ENCODE measurements at regions of chr15 and their contacts with region 1.

Region 1: GRCh38 chr15:73265536-73266153 is 103.1 kb downstream of the HCN4 start:
- DNase-seq: peak; percentile 38 to 69 (median 69)
- H3K4me3 ChIP-seq: no peak overlapping the region
- H3K27ac ChIP-seq: no peak overlapping the region
- H3K4me1 ChIP-seq: no peaks in the 10 kb centered on the region
- H3K27me3 ChIP-seq: peaks cover 0 to 7% (median 0%) of the 10 kb centered on the region in 5 experiments

Region 2: DNA sequence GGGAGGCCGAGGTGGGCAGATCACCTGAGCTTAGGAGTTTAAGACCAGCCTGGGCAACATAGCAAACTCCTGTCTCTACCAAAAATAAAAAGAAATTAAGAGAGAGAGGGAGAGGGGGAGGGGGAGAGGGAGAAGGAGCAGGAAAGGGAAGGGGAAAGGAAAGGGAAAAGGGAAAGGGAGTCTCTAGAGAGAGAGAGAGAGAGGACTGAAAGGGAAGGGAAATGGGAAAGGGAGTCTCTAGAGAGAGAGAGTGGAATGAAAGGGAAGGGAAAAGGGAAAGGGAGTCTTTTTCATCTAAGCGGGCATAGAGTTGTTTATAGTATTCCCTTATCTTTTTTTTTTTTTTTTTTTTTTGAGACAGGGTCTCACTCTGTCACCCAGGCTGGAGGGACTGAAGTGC is 65.3 kb before region 1 on chr15:
- CTCF ChIA-PET with region 1: no interaction called
- POLR2A ChIA-PET with region 1: no interaction called
- DNase-seq: no peak
- H3K4me3 ChIP-seq: no peak overlapping the region
- H3K27ac ChIP-seq: no peak overlapping the region
- H3K4me1 ChIP-seq: no peaks in the 10 kb centered on the region
- H3K27me3 ChIP-seq: peaks cover 2 to 5% (median 4%) of the 10 kb centered on the region in 5 experiments

Region 3: DNA sequence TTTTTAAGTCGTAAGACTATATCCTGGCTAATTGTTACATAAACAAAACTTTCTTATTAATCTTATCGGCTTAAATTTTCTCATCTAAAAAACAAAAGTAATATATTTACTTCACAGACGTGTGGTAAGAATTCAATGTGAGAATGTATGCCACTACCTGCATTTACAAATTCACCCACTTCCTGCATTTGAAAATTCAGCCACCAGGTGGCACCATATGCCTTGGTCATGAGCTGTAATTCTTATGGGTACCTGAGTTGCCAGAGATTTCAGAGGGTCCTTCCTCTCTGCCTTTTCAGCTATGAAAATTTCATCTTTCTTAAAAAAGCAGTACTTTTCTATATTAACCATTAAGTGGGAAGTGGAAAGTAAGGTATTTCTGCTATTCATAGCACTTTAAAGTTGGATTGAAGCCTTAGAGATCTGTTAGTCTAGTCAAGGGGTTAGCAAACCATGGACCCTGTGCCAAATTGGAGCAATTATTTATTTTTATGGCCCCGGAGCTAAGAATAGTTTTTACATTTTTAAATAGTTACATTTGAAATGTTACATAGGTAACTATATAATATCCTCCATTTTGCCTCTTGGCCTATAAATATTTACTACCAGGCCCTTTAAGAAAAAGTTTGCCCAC is 24.7 kb before region 1 on chr15:
- CTCF ChIA-PET with region 1: interaction called, 18 read pairs
- POLR2A ChIA-PET with region 1: no interaction called
- DNase-seq: peak; percentile 72 to 87 (median 82)
- H3K4me3 ChIP-seq: no peak overlapping the region
- H3K27ac ChIP-seq: no peak overlapping the region
- H3K4me1 ChIP-seq: no peaks in the 10 kb centered on the region
- H3K27me3 ChIP-seq: peaks cover 1 to 12% (median 4%) of the 10 kb centered on the region in 5 experiments

Region 4: GRCh38 chr15:73249499-73249898 is 16.1 kb before region 1 on chr15:
- CTCF ChIA-PET with region 1: interaction called, 11 read pairs
- POLR2A ChIA-PET with region 1: no interaction called
- DNase-seq: no peak
- H3K4me3 ChIP-seq: no peak overlapping the region
- H3K27ac ChIP-seq: no peak overlapping the region
- H3K4me1 ChIP-seq: no peaks in the 10 kb centered on the region
- H3K27me3 ChIP-seq: peaks cover 5 to 31% (median 7%) of the 10 kb centered on the region in 5 experiments

Region 5: DNA sequence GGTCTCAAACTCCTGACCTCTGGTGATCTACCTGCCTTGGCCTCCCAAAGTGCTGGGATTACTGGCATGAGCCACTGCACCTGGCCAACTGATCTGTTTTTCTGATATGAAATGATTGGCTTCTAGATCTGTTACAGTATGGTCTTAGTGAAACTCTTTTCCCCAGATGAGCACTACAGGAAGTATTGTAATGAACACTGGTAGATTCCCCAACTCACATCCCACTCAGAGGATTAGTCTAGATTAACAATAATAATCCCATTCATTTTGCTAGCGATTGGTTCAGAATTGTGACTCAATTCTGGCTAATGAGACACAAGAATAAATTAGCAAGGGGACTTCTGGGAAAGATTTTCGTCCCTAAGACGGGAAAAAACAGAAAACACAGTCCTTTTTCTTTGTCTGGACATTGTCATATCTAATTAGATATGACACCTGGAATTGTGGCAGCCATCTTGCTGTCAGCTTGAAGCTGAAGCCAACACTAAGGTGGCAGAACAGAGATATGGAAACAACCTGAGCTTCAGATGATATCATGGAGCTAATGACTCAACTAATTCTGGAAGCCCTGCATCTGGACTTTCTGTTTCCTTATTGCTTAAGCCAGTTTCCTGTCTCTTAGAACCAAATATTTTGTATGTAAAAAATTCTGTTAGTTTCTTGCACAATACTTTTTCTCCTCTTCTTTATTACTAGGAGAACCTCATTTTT is 384.9 kb after region 1 on chr15:
- CTCF ChIA-PET with region 1: no interaction called
- POLR2A ChIA-PET with region 1: no interaction called
- DNase-seq: peak; percentile 72 to 94 (median 90)
- H3K4me3 ChIP-seq: peak overlapping the region in 1 of 7 experiments; percentile 5
- H3K27ac ChIP-seq: peak overlapping the region; percentile 16 to 45
- H3K4me1 ChIP-seq: peaks cover 0 to 19% (median 16%) of the 10 kb centered on the region in 4 experiments
- H3K27me3 ChIP-seq: no peaks in the 10 kb centered on the region